ENCODE measurements at regions of chr21 and their contacts with region 1.

Region 1: DNA sequence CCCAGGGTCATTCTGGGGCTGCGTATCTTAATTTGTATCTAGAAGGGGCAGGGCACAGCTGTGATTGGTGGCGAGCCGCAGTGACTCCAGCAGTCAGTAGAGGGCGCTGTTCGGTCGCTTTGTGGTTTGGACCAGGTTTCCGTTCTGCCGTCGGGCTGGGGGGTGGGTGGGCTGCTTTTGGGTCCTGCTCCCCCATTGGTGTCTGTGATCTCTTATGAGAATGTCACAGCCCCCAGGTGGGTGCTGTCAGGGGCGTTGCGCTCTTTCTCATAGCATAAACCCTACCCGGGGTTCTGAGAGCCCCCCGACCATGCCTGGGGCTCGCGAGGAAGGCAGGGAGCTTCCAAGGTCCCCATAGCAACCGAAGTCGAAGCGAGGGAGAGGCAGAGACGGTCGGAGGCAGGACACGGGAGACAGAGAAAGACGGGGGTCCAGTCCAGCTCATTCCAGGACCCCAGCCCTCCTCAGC is 5.4 kb downstream of the TFF3 start:
- DNase-seq: peak; percentile 84
- CTCF ChIP-seq: peak; percentile 97

Region 2: DNA sequence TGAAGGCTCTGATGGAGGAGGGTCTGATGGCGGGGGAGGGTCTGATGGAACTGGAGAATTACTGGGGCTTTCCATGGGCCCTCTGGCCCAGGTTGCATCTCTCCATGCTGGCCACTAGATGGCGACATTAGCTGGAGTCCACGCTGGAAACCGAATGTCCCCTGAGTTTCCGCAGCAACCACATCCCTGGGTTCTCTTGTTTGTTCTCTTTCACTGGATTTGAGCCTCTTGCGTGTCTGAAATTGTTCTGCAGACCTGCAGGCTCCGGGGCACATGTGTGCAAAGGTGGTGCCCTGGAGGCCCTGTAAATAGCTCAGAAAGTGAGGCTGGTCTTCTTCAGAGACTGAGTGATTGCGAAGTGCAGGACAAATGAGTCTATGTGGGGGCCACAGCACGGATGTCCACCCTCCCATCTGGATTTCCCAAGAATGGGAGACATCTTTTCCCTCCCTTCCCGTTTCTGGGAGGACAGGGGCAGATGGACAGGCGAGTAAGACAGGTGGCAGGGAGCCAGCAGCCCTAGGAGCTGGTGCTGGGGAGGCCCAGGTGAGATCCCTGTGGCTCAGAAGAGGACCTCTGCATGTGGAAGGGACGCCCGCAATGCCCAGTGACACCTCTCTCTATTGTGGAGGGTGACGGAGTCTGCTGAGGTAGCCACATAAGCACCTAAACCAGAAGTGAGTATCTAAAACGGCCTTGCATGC is 164.1 kb before region 1 on chr21:
- CTCF ChIA-PET with region 1: interaction called, 13 read pairs
- POLR2A ChIA-PET with region 1: no interaction called
- DNase-seq: peak; percentile 88
- CTCF ChIP-seq: peak; percentile 89

Region 3: DNA sequence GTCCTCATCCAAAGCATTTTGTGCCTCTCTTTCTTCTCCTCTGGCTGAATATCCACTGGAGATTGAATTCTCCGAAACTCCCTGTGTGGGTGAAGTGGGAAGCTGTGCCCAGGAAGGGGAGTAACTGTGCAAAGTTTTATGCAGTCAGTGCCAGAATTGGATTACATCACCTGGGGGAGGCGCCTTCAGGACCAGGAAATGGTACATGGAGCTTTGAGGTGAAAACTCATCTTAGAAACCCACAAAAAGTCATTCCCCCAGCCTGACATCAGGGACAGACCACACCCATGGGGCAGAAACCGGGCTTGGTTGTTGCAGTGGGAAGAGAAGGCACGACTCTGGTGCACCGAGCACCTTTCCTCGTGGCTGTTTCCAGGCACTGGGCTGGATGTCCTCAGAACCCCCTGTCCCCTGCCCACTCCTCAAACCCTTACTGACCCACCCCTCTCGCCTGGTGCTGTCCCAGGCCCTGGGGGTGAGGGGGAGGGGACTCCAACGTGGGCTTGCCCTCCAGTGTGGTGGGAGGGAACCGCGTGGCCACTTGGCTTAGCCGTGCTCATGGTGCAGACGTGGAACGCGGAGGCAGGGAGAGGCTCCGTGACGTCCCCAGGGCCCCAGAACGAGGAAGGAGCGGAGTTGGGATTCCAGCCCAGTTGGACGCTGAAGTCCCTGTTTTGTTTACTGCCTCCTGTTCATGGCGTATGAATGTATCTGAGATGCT is 10.3 kb before region 1 on chr21:
- CTCF ChIA-PET with region 1: interaction called, 23 read pairs
- POLR2A ChIA-PET with region 1: no interaction called
- DNase-seq: no peak
- CTCF ChIP-seq: no peak

Region 4: GRCh38 chr21:42337830-42338728 is 28.3 kb after region 1 on chr21:
- CTCF ChIA-PET with region 1: interaction called, 30 read pairs
- POLR2A ChIA-PET with region 1: no interaction called
- DNase-seq: peak; percentile 67
- CTCF ChIP-seq: peak; percentile 59

Region 5: GRCh38 chr21:42424914-42425541 is 115.2 kb after region 1 on chr21:
- CTCF ChIA-PET with region 1: interaction called, 25 read pairs
- POLR2A ChIA-PET with region 1: no interaction called
- DNase-seq: no peak
- CTCF ChIP-seq: no peak

Region 6: DNA sequence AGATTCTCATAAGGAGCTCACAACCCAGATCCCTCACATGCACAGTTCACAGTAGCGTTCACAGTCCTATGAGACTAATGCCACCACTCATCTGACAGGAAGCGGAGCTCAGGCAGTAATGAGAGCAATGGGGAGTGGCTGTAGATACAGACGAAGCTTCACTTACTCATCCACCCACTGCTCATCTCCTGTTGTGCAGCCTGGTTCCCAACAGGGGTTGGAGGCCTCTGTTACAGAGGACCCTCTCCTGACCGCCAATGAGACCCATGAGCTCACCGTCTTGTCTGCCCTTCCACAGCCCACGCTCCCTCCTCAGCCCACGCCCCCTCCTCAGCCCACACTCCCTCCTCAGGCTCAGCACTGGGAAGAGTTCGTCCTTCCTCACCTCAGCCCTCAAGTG is 146.7 kb after region 1 on chr21:
- CTCF ChIA-PET with region 1: interaction called, 49 read pairs
- POLR2A ChIA-PET with region 1: no interaction called
- DNase-seq: no peak
- CTCF ChIP-seq: no peak

Measured in GM10248 (cell line).